Esophagus muscularis mucosa (tissue), 4 donors: ENCODE measurements at regions of chr15 and their contacts with region 1.

Region 1: GRCh38 chr15:39084683-39085530 is 496.0 kb upstream of the THBS1 start:
- DNase-seq: no peak
- H3K4me3 ChIP-seq: no peak overlapping the region
- H3K27ac ChIP-seq: peak overlapping the region; percentile 66 to 78 (median 74)
- H3K4me1 ChIP-seq: peaks cover 0 to 31% (median 23%) of the 10 kb centered on the region in 4 donors
- H3K27me3 ChIP-seq: no peaks in the 10 kb centered on the region
- CTCF ChIP-seq: no peak
- EP300 ChIP-seq: peak; percentile 9
- POLR2A ChIP-seq: no peak

Region 2: GRCh38 chr15:39132954-39133600 is 48.2 kb after region 1 on chr15:
- intact Hi-C with region 1: loop called (anchors 10 kb)
- DNase-seq: no peak
- H3K4me3 ChIP-seq: no peak overlapping the region
- H3K27ac ChIP-seq: peak overlapping the region; percentile 68 to 82 (median 75)
- H3K4me1 ChIP-seq: peaks cover 11 to 46% (median 31%) of the 10 kb centered on the region in 4 donors
- H3K27me3 ChIP-seq: no peaks in the 10 kb centered on the region
- CTCF ChIP-seq: no peak
- EP300 ChIP-seq: no peak
- POLR2A ChIP-seq: no peak